Head of caudate nucleus (tissue), 42 donors: ENCODE measurements at regions of chr3 and their contacts with region 1.

Region 1: GRCh38 chr3:192566706-192567290 is 160.5 kb downstream of the FGF12 start:
- DNase-seq: peak; percentile 64 to 95 (median 86)

Region 2: DNA sequence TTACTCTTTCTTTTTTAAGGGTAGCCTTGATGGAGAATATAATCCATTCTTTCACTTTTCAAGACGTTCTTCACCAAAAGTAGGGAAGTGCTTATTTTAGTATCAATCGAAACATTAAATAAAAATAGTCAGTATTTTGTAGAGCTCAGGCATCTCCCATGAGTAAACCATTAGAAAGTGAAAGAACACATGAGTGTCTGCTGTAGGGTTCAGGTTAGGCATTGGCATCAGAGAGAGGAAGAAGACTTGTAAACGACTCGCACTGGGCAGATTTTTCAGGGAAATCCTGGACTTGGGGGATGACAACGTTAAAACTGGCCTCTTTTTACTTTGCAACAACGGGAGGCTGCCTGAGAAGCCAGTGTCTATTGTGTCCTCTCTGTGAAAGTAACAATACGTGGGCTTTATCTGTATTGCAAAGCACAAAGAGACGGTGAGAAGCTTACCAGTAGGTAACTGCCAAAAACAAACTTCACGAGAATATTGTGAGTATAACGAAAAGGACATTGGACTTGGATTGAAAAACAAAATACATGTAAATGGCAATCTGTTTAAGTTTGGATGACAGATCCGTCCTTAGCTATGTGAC is 654.1 kb before region 1 on chr3:
- intact Hi-C with region 1: no loop called
- DNase-seq: no peak

Region 3: GRCh38 chr3:192802957-192803899 is 236.4 kb after region 1 on chr3:
- intact Hi-C with region 1: loop called (anchors 10 kb)
- DNase-seq: peak in 3 of 42 donors; percentile 13 to 39 (median 37)

Region 4: GRCh38 chr3:193572426-193572908 is 1005.7 kb after region 1 on chr3:
- intact Hi-C with region 1: loop called (anchors 5 kb)
- DNase-seq: peak in 41 of 42 donors; percentile 50 to 89 (median 73)